GM12878 (cell line): ENCODE measurements at regions of chr14 and their contacts with region 1.

Region 1: DNA sequence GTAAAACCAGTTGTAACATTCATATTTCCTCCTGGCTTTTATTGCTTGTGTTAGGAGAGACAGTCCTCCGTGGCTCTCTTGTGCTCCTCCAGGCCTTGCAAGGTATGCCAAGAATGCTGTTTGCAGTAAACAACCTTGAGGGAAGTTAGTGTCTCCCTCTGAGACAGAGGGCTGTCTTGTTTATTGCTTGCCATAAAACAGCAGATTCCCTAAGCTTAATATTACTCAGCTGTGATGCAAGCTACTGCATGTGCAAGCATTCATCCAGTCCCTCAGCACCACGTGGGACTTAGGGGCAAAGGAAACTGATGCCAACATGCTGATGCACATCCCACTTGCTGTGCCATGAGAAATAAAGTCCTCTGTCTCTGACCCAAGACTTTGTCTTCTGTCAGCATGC is 6.6 kb downstream of the POMT2 start:
- DNase-seq: no peak
- ATAC-seq: no peak
- H3K4me3 ChIP-seq: no peak overlapping the region
- H3K27ac ChIP-seq: no peak overlapping the region
- H3K4me1 ChIP-seq: no peaks in the 10 kb centered on the region
- H3K27me3 ChIP-seq: no peaks in the 10 kb centered on the region
- CTCF ChIP-seq: no peak
- EP300 ChIP-seq: no peak
- POLR2A ChIP-seq: no peak
- RAD21 ChIP-seq: no peak

Region 2: DNA sequence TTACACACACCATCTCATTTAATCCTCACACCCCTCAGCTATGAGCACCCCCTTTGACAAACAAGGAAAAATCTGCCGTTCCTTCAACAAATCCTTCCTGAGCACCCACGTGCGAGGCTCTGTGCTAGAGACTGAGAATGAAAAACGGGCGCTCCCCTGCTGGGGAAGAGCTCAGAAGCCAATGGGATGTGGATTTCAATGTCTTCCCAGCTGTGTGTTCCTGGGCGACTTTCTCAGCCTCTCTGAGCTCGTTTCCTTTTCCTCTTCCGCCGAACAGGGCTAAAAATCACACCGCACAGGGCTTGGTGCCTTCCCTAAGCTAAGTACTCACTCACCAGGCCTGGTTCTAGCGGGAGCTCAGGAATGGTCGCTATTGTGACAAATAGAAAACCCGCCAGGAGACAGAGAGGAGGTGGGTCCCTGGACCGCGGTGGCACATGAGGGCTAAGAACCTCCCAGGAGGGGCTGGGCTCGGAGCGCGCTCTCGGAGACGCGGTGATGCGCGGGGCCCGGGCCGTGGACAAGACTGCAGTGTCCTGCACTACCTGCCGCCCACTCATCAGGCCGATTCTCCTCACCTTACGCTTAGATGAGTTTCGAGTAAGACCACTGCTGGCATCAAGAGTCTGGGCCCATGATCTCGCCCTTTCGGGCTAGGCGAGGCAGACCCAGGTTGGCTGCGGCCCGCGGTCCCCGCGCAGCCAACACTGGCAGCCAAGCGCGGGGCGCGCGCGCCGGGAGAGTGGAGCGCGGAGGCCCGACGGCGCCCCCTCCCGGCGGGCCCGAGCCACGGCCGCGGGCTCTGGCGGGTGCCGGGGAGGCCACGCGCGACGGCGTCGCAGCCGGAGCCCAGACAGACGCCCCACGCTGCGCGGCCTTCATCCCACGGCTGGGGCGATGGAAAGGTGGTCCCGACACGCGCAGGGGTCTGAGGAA is 189.4 kb before region 1 on chr14:
- CTCF ChIA-PET with region 1: interaction called, 10 read pairs
- POLR2A ChIA-PET with region 1: no interaction called
- RAD21 ChIA-PET with region 1: interaction called, 15 read pairs
- SMC1A ChIA-PET with region 1: interaction called, 15 read pairs
- in situ Hi-C with region 1: no loop called
- intact Hi-C with region 1: no loop called
- DNase-seq: no peak
- ATAC-seq: peak; percentile 50
- H3K4me3 ChIP-seq: peak overlapping the region; percentile 48; the same call in 1 of the 2 replicates
- H3K27ac ChIP-seq: peak overlapping the region; percentile 4; the same call in 1 of the 2 replicates
- H3K4me1 ChIP-seq: peaks cover 49% of the 10 kb centered on the region
- H3K27me3 ChIP-seq: peaks cover 6 to 7% of the 10 kb centered on the region in 2 experiments; a peak in 2 of 4 replicates
- CTCF ChIP-seq: peak; percentile 33 to 61 (median 52); a peak in 4 of 6 replicates
- EP300 ChIP-seq: no peak
- POLR2A ChIP-seq: peak; percentile 45; the same call in 1 of the 2 replicates
- RAD21 ChIP-seq: peak; percentile 59; the same call in 1 of the 2 replicates

Region 3: GRCh38 chr14:77212943-77213678 is 100.9 kb before region 1 on chr14:
- CTCF ChIA-PET with region 1: interaction called, 19 read pairs
- POLR2A ChIA-PET with region 1: no interaction called
- RAD21 ChIA-PET with region 1: interaction called, 15 read pairs
- SMC1A ChIA-PET with region 1: interaction called, 14 read pairs
- in situ Hi-C with region 1: no loop called
- intact Hi-C with region 1: no loop called
- DNase-seq: no peak
- ATAC-seq: peak; percentile 97
- H3K4me3 ChIP-seq: no peak overlapping the region
- H3K27ac ChIP-seq: no peak overlapping the region
- H3K4me1 ChIP-seq: no peaks in the 10 kb centered on the region
- H3K27me3 ChIP-seq: 0 out of 4 replicates have a peak, but pooled peaks cover 0 to 4% of the 10 kb centered on the region in 2 experiments
- CTCF ChIP-seq: peak; percentile 70 to 89 (median 83)
- EP300 ChIP-seq: no peak
- POLR2A ChIP-seq: no peak
- RAD21 ChIP-seq: peak; percentile 66

Region 4: GRCh38 chr14:77301103-77301502 is 12.9 kb before region 1 on chr14:
- CTCF ChIA-PET with region 1: interaction called, 158 read pairs
- POLR2A ChIA-PET with region 1: no interaction called
- RAD21 ChIA-PET with region 1: interaction called, 43 read pairs
- SMC1A ChIA-PET with region 1: interaction called, 22 read pairs
- in situ Hi-C with region 1: no loop called
- intact Hi-C with region 1: loop called (anchors 1 kb)
- DNase-seq: no peak
- ATAC-seq: peak; percentile 92
- H3K4me3 ChIP-seq: no peak overlapping the region
- H3K27ac ChIP-seq: no peak overlapping the region
- H3K4me1 ChIP-seq: no peaks in the 10 kb centered on the region
- H3K27me3 ChIP-seq: no peaks in the 10 kb centered on the region
- CTCF ChIP-seq: peak; percentile 73 to 81 (median 74)
- EP300 ChIP-seq: no peak
- POLR2A ChIP-seq: no peak
- RAD21 ChIP-seq: peak; percentile 83

Region 5: DNA sequence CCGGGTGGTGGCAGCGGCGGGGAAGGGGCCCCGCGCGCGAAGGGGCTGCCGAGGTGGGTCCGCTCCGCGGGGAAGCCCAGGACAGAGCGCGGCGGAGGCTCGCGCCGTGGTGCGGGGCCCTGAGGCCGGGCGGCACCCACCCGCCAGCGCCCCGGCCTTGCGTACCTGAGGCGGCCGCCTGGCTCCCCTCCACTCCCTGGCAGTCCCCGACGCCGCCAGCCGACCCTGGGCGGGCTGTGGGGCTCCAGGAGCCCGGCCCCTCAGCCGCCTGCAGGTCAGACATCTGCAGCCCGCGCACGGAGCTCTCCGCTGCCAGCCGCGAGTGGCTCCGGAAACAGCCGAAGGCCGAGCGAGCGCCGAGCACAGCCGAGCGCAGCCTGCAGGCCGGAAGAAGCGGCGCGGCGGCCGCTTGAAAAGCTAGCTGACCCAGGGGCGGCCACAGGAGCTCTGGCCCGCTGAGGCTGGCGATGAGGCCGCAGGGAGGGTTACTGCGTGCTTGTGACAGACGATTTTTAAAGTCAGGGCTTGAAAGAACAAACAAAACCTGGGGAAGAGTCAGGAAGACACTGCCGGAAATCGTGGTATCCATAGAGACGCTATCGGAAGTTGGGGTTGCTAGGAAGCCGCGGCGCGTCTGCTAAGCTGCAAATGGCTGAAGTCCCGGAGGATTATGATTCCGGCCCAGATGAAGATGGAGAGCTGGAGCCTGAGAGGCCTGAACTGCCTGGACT is 62.9 kb after region 1 on chr14 and contains the starts of genes SAMD15 and TMED8:
- CTCF ChIA-PET with region 1: interaction called, 9 read pairs
- POLR2A ChIA-PET with region 1: interaction called, 7 read pairs
- RAD21 ChIA-PET with region 1: interaction called, 12 read pairs
- SMC1A ChIA-PET with region 1: interaction called, 8 read pairs
- in situ Hi-C with region 1: no loop called
- intact Hi-C with region 1: no loop called
- DNase-seq: peak; percentile 53
- ATAC-seq: peak; percentile 94
- H3K4me3 ChIP-seq: peak within 1 kb of the TSS; percentile 83
- H3K27ac ChIP-seq: peak within 1 kb of the TSS; percentile 89
- H3K4me1 ChIP-seq: peaks cover 15% of the 10 kb centered on the region
- H3K27me3 ChIP-seq: no peaks in the 10 kb centered on the region
- CTCF ChIP-seq: peak in 2 of 3 experiments; percentile 25 to 27; a peak in 2 of 6 replicates
- EP300 ChIP-seq: no peak
- POLR2A ChIP-seq: peak; percentile 75
- RAD21 ChIP-seq: no peak
- polyA plus RNA-seq, gene SAMD15: 0.63 to 0.93 TPM
- polyA plus RNA-seq, gene TMED8: 7.3 to 7.4 TPM

Region 6: GRCh38 chr14:77457522-77458290 is 143.7 kb after region 1 on chr14 and contains the starts of genes AHSA1 and VIPAS39:
- CTCF ChIA-PET with region 1: interaction called, 18 read pairs
- POLR2A ChIA-PET with region 1: no interaction called
- RAD21 ChIA-PET with region 1: interaction called, 10 read pairs
- SMC1A ChIA-PET with region 1: interaction called, 10 read pairs
- in situ Hi-C with region 1: no loop called
- intact Hi-C with region 1: no loop called
- DNase-seq: peak; percentile 99
- ATAC-seq: peak; percentile 95
- H3K4me3 ChIP-seq: peak within 1 kb of the TSS; percentile 88
- H3K27ac ChIP-seq: peak within 1 kb of the TSS; percentile 97
- H3K4me1 ChIP-seq: peaks cover 13% of the 10 kb centered on the region
- H3K27me3 ChIP-seq: no peaks in the 10 kb centered on the region
- CTCF ChIP-seq: no peak
- EP300 ChIP-seq: no peak
- POLR2A ChIP-seq: peak; percentile 93
- RAD21 ChIP-seq: no peak
- polyA plus RNA-seq, gene AHSA1: 51.8 to 98.3 TPM
- polyA plus RNA-seq, gene VIPAS39: 6.7 to 10.5 TPM